ENCODE measurements at regions of chr19 and their contacts with region 1.

Region 1: GRCh38 chr19:48993175-48994034 is at the starts of genes GYS1 and RUVBL2:
- DNase-seq: peak; percentile 99
- H3K4me3 ChIP-seq: peak within 1 kb of the TSS; percentile 97
- H3K27ac ChIP-seq: peak within 1 kb of the TSS; percentile 41; the same call in 1 of the 2 replicates
- H3K4me1 ChIP-seq: peaks cover 16% of the 10 kb centered on the region
- H3K27me3 ChIP-seq: no peaks in the 10 kb centered on the region
- CTCF ChIP-seq: peak; percentile 91
- total RNA-seq, gene GYS1: 47.5 and 54.2 TPM in 2 replicates
- total RNA-seq, gene RUVBL2: 175 and 179 TPM in 2 replicates

Region 2: DNA sequence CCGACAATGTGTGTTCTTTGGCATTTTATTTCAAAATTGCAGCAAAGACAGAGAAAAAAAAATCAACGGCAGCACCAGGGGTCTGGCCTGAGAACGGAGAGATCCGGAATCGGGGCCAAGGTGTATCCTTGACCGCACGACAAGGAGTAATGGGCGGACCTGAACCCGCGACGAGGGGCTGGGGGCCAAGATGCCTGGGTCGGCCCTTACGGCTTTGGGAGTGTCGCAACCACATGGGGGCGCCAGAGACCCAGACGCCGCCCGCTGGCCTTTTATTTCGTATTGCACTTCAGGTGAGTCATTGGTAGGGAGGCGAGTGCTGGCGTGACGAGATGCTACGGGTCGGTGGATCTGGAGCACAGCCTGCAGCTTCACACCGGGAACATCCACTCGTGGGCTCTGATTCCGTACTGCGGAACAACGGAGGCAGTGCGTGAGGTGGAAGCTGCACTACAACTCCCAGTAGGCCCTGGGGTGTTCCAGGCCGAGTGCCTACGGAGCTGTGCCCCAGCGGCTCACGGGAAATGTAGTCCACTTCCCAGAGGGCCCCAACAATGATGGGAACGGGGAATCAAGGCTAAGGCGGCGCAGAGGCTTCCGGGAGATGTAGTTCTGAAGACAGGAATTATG is 198.2 kb before region 1 on chr19:
- CTCF ChIA-PET with region 1: interaction called, 7 read pairs
- POLR2A ChIA-PET with region 1: no interaction called
- intact Hi-C with region 1: loop called (anchors 5 kb)
- DNase-seq: peak; percentile 87 to 88
- H3K4me3 ChIP-seq: peak overlapping the region; percentile 55
- H3K27ac ChIP-seq: peak overlapping the region; percentile 34
- H3K4me1 ChIP-seq: 0 out of 2 replicates have a peak, but pooled peaks cover 3% of the 10 kb centered on the region
- H3K27me3 ChIP-seq: no peaks in the 10 kb centered on the region
- CTCF ChIP-seq: peak; percentile 100

Region 3: GRCh38 chr19:48947258-48947542 is 46.2 kb before region 1 on chr19:
- CTCF ChIA-PET with region 1: no interaction called
- POLR2A ChIA-PET with region 1: interaction called, 12 read pairs
- intact Hi-C with region 1: no loop called
- DNase-seq: no peak
- H3K4me3 ChIP-seq: no peak overlapping the region
- H3K27ac ChIP-seq: no peak overlapping the region
- H3K4me1 ChIP-seq: no peaks in the 10 kb centered on the region
- H3K27me3 ChIP-seq: no peaks in the 10 kb centered on the region
- CTCF ChIP-seq: no peak

Region 4: GRCh38 chr19:48965040-48965805 is 28.2 kb before region 1 on chr19 and contains the start of gene FTL:
- CTCF ChIA-PET with region 1: interaction called, 11 read pairs
- POLR2A ChIA-PET with region 1: interaction called, 12 read pairs
- intact Hi-C with region 1: loop called (anchors 2 kb)
- DNase-seq: peak; percentile 92 to 99
- H3K4me3 ChIP-seq: peak within 1 kb of the TSS; percentile 84
- H3K27ac ChIP-seq: peak within 1 kb of the TSS; percentile 95
- H3K4me1 ChIP-seq: peaks cover 39% of the 10 kb centered on the region
- H3K27me3 ChIP-seq: no peaks in the 10 kb centered on the region
- CTCF ChIP-seq: no peak
- total RNA-seq, gene FTL: 3,402 and 3,822 TPM in 2 replicates

Region 5: GRCh38 chr19:48970923-48971395 is 22.4 kb before region 1 on chr19:
- CTCF ChIA-PET with region 1: interaction called, 11 read pairs
- POLR2A ChIA-PET with region 1: interaction called, 4 read pairs
- intact Hi-C with region 1: no loop called
- DNase-seq: peak; percentile 45 to 64
- H3K4me3 ChIP-seq: no peak overlapping the region
- H3K27ac ChIP-seq: no peak overlapping the region
- H3K4me1 ChIP-seq: peaks cover 12% of the 10 kb centered on the region
- H3K27me3 ChIP-seq: no peaks in the 10 kb centered on the region
- CTCF ChIP-seq: peak; percentile 97

Region 6: DNA sequence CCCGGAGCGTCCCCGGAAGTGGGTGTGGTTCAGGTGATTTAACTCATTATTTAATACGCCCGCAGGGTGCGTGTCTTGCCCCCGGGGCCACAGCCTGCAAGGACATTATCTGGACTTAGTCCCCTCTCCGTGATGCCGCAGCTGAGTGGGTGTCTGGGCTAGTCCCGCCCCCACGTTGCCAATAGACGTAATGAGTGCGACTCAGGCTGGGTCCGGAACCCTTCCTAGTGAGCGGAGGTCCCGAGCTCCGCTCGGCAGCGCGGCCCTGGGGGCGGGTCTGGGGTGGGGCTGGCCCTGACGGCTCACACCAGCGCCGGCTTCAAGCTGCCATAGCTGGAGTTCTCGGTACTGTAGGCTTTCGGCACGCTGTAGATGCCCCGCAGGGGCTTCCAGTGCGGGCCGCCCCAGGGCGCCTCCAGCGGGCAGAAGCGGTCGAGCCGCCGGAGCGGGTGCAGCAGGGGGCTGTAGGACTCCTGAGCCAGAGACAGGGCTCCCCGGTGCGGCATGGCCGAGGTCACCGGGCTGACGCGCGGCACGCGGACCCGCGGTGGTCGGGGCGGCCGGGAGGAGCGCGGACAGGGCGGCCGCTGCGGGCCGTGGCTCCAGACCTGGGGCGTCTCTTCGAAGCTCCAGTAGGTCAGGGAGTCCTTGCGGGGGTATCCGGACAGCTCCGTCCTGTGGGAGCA is 24.4 kb after region 1 on chr19:
- CTCF ChIA-PET with region 1: interaction called, 3 read pairs
- POLR2A ChIA-PET with region 1: interaction called, 10 read pairs
- intact Hi-C with region 1: no loop called
- DNase-seq: peak in 1 of 2 experiments; percentile 55
- H3K4me3 ChIP-seq: peak overlapping the region; percentile 48; the same call in 1 of the 2 replicates
- H3K27ac ChIP-seq: no peak overlapping the region
- H3K4me1 ChIP-seq: peaks cover 9% of the 10 kb centered on the region; the same call in 1 of the 2 replicates
- H3K27me3 ChIP-seq: no peaks in the 10 kb centered on the region
- CTCF ChIP-seq: peak; percentile 57; the same call in 1 of the 2 replicates

Region 7: GRCh38 chr19:49106648-49107135 is 113.3 kb after region 1 on chr19:
- CTCF ChIA-PET with region 1: no interaction called
- POLR2A ChIA-PET with region 1: no interaction called
- intact Hi-C with region 1: no loop called
- DNase-seq: peak in 1 of 2 experiments; percentile 50
- H3K4me3 ChIP-seq: no peak overlapping the region
- H3K27ac ChIP-seq: no peak overlapping the region
- H3K4me1 ChIP-seq: no peaks in the 10 kb centered on the region
- H3K27me3 ChIP-seq: no peaks in the 10 kb centered on the region
- CTCF ChIP-seq: peak; percentile 92

Region 8: DNA sequence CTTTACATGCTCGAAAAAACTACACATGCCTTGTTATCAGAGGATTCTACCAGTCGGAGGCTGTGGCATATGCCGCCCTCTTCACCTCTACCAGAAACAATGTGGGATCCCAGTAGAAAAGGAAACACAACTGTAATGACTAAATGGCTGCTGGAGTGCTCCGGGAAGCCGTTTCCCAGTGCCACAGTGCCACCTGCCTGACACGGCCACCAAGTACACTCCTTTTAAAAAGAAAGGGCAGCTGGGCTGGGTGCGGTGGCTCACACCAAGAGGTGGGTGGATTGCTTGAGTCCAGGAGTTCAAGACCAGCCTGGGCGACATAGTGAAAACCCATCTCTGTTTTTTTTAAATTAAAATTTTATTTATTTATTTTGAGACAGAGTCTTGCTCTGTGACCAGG is 231.5 kb after region 1 on chr19:
- CTCF ChIA-PET with region 1: interaction called, 5 read pairs
- POLR2A ChIA-PET with region 1: interaction called, 4 read pairs
- intact Hi-C with region 1: loop called (anchors 2 kb)
- DNase-seq: peak; percentile 73 to 84
- H3K4me3 ChIP-seq: no peak overlapping the region
- H3K27ac ChIP-seq: no peak overlapping the region
- H3K4me1 ChIP-seq: no peaks in the 10 kb centered on the region
- H3K27me3 ChIP-seq: no peaks in the 10 kb centered on the region
- CTCF ChIP-seq: peak; percentile 91

Region 9: GRCh38 chr19:49287141-49287770 is 293.9 kb after region 1 on chr19:
- CTCF ChIA-PET with region 1: no interaction called
- POLR2A ChIA-PET with region 1: no interaction called
- intact Hi-C with region 1: no loop called
- DNase-seq: no peak
- H3K4me3 ChIP-seq: no peak overlapping the region
- H3K27ac ChIP-seq: no peak overlapping the region
- H3K4me1 ChIP-seq: no peaks in the 10 kb centered on the region
- H3K27me3 ChIP-seq: peaks cover 50% of the 10 kb centered on the region; the same call in 1 of the 2 replicates
- CTCF ChIP-seq: no peak

Measured in PC-9 (cell line).